Panc1 (cell line): ENCODE measurements at regions of chr11 and their contacts with region 1.

Region 1: DNA sequence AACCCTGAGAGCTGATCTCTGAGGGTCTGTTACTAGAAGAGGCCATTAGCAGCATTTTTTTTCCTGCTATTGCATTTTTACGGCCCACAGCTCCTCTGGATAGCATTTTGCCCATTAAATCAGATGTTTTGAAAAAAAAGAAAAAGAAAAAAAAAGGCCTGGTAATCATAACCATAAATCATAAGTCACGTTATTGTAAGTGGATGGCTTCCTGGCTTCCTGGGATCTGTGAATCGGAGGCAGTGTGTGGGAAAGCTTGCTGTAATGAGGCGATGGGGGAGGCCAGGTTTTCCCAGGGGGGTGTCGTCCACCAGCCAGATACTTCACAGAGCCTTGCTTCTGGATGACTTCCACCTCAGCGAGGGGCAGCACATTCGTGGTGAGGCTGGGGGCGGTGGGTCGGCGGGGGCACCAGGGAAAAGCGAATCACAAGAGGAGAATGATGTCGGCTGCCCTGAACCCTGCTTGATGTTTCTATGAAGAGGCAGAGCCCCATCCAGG is 106.5 kb upstream of the SYT13 start:
- DNase-seq: no peak
- ATAC-seq: no peak
- H3K4me3 ChIP-seq: no peak overlapping the region
- H3K27ac ChIP-seq: no peak overlapping the region
- H3K4me1 ChIP-seq: no peaks in the 10 kb centered on the region
- H3K27me3 ChIP-seq: peaks cover 4% of the 10 kb centered on the region; the same call in 1 of the 2 replicates
- CTCF ChIP-seq: no peak

Region 2: DNA sequence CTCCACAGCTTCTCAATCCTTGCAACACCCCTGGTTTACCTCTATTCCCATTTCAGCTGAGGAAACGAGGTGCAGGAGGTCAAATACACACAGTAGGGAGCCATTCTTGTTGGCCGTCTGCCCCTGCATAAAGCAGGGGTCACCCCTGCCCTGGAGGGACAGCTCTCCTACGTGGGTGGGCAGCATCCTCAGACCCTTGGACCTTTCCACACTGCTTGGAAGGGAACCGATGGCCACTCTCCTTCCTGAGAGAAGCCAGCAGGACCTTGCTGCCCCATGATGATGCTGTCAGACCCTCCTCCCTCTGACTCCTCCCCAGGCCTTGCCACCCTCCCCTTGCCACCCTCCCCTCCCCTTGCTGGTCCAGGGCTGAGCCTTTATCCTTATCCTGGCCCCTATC is 14.6 kb after region 1 on chr11:
- CTCF ChIA-PET with region 1: interaction called, 12 read pairs
- POLR2A ChIA-PET with region 1: no interaction called
- in situ Hi-C with region 1: no loop called
- intact Hi-C with region 1: no loop called
- DNase-seq: no peak
- ATAC-seq: no peak
- H3K4me3 ChIP-seq: no peak overlapping the region
- H3K27ac ChIP-seq: no peak overlapping the region
- H3K4me1 ChIP-seq: no peaks in the 10 kb centered on the region
- H3K27me3 ChIP-seq: peaks cover 12% of the 10 kb centered on the region
- CTCF ChIP-seq: no peak

Region 3: DNA sequence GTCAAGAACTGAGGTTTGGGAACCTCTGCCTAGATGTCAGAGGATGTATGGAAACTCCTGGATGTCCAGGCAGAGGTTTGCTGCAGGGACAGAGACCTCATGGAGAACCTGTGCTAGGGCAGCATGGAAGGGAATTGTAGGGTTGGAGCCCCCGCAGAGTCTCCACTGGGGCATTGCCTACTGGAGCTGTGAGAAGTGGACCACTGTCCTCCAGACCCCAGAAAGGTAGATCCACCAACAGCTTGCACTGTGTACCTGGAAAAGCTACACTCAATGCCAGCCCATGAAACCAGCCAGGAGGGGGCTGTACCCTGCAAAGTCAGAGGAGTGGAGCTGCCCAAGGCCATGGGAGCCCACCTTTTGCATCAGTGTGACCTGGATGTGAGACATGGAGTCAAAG is 243.3 kb after region 1 on chr11:
- CTCF ChIA-PET with region 1: no interaction called
- POLR2A ChIA-PET with region 1: interaction called, 17 read pairs
- in situ Hi-C with region 1: no loop called
- intact Hi-C with region 1: no loop called
- DNase-seq: no peak
- ATAC-seq: no peak
- H3K4me3 ChIP-seq: no peak overlapping the region
- H3K27ac ChIP-seq: no peak overlapping the region
- H3K4me1 ChIP-seq: no peaks in the 10 kb centered on the region
- H3K27me3 ChIP-seq: peaks cover 13% of the 10 kb centered on the region
- CTCF ChIP-seq: no peak